OCI-LY7 (cell line): ENCODE measurements at regions of chr20 and their contacts with region 1.

Region 1: DNA sequence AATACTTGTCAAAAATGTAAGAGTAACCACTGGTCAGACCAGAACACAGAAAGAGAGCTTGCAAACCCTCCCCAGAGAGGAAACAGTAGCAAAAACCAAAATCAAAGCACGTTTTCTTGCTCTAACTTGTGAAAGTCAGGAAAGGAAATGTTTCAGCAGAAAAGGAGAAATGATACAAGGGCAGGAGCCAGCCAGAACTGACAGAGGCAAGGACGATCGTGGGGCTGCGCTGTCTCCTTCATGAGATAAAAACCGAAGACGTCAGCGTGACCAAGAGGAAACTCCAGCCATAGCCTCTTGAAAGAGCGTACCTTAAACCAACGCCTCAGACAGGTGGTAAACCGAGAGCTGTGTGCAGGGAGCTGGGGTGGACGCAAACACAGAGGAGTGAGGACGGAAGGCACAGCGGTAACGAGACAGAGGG is 27.5 kb downstream of the LAMA5 start:
- DNase-seq: peak; percentile 92
- H3K4me3 ChIP-seq: peak overlapping the region; percentile 62
- H3K27ac ChIP-seq: peak overlapping the region; percentile 97
- H3K4me1 ChIP-seq: peaks cover 71% of the 10 kb centered on the region
- CTCF ChIP-seq: no peak

Region 2: DNA sequence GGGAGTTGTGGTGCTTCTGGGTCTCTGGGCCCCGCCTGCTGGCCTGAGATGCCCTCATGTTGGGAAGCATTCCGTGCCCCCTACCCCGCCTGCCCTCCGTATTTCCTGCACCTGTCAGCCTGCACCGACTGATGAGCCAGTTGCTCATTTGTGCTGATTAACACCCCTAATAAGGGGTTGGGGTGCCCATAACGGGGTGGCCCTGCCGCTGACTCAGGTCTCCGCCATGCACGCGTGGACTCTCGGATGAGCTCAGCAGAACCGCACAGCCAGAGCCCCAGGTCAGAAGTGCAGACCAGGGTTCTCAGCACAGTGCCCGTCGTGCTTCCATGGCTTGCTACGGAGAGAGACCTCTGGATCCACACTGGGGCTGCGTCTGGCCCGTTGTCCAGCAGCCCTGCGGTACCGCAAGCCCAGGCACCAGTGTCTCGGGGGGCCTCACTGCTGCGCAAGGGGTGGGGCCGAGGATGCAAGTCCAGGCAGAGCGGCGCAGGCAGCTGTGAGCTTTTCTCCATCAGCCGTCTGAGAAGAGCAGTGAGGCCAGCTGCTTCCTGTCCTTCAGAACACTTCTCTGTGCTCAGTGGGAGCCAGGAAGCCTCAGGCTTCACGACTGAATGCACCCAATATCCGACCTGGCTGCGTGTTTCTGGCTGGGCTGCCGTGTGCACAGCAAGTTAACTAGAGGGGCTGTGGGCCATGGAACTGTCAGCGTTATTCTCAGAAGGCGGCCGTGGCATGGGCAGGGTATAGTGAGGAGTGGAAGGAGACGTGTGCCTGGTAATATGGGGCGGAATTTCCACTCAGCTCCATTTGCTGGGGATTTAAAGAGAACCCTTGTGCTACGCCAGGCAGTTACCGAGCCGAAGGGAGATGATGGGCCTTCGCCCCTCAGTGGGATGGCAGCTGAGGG is 138.2 kb before region 1 on chr20:
- CTCF ChIA-PET with region 1: no interaction called
- POLR2A ChIA-PET with region 1: no interaction called
- intact Hi-C with region 1: no loop called
- DNase-seq: peak; percentile 70
- H3K4me3 ChIP-seq: no peak overlapping the region
- H3K27ac ChIP-seq: no peak overlapping the region
- H3K4me1 ChIP-seq: peaks cover 23% of the 10 kb centered on the region
- CTCF ChIP-seq: no peak

Region 3: DNA sequence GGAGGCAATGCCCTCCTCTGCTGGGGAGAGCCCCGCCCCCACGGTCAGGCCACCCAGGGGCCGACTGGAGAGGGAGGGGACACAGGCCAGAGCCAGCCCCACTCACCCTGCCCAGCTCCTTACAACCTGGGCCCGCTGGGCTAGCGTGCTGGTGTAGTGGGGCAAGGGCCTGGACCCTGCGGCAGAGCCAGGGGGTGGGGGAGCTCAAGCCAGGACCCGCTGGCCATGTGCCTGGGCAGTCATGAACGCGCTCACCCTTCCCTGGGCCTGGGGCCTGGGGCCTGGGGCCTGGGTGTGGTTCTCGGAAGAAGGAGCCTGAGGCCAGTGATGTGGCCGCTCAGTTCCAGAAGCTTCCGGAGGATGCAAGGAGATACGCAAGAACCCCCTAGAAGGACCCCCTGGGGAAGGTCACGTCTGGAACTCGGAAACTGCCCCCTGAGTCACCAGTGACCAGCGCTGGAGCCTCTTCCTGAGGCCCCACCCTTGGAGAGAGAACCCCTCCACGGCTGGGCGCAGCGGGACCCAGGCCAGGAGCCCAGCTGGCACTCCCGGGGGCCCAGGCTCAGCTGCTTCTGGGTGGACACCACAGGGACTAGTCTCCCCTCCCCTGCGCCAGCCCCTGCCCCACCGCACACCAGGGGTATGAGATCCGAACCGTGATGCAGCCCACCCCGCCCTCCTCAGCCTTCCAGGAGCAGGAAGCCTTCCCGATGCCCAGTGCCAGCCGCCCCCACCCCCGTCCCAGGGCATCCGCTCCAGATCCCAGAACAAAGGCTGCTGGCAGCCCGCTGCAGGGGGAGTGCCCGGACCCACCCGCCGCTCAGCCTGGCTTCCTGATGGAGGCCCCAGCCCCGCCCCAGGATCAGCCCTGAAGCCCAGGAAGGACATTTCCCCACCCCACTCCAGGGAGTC is 19.8 kb after region 1 on chr20:
- CTCF ChIA-PET with region 1: no interaction called
- POLR2A ChIA-PET with region 1: interaction called, 5 read pairs
- intact Hi-C with region 1: loop called (anchors 1 kb)
- DNase-seq: no peak
- H3K4me3 ChIP-seq: no peak overlapping the region
- H3K27ac ChIP-seq: peak overlapping the region; percentile 46
- H3K4me1 ChIP-seq: peaks cover 66% of the 10 kb centered on the region
- CTCF ChIP-seq: no peak

Region 4: DNA sequence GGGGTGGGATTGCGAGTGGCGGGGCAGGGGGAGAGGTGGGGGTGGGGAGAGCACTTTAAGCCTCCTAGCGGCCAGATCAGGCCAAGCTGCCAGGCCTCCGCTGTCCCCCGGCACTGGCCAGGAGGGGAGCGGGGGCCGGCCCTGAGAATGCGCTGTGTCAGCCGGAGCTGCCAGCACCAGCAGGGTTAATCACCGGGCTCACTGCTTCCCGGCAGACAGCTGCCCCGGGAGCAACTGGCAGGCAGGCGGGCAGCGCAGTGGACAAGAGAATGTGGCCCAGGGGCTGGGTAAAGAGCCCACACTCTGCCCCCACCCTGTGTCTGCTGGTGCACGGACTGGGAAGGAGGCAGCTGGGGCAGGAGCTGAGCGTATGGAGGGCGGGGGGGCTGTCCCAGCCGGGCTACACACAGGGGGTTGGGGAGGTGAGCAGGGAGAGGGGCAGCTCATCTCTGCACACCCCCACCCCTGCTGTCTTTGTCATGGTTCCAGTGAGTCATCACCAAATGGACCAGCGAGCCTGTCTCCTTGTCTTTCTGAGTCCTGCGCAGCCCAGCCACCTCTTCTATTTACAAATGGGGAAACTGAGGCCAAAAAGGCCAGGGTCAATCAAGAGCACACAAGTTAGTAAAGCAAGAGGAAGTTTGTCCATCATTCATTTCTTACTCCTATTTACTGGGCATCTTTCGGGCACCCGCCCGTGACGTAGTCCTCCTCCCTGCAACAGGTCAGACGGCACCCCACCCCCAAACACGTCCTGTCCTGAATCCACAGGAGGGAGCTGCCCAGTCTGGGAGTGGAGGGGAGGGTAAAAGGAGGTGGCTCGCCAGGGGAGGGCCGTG is 29.5 kb after region 1 on chr20:
- CTCF ChIA-PET with region 1: no interaction called
- POLR2A ChIA-PET with region 1: interaction called, 3 read pairs
- intact Hi-C with region 1: loop called (anchors 1 kb)
- DNase-seq: no peak
- H3K4me3 ChIP-seq: no peak overlapping the region
- H3K27ac ChIP-seq: no peak overlapping the region
- H3K4me1 ChIP-seq: peaks cover 39% of the 10 kb centered on the region
- CTCF ChIP-seq: peak; percentile 42

Region 5: DNA sequence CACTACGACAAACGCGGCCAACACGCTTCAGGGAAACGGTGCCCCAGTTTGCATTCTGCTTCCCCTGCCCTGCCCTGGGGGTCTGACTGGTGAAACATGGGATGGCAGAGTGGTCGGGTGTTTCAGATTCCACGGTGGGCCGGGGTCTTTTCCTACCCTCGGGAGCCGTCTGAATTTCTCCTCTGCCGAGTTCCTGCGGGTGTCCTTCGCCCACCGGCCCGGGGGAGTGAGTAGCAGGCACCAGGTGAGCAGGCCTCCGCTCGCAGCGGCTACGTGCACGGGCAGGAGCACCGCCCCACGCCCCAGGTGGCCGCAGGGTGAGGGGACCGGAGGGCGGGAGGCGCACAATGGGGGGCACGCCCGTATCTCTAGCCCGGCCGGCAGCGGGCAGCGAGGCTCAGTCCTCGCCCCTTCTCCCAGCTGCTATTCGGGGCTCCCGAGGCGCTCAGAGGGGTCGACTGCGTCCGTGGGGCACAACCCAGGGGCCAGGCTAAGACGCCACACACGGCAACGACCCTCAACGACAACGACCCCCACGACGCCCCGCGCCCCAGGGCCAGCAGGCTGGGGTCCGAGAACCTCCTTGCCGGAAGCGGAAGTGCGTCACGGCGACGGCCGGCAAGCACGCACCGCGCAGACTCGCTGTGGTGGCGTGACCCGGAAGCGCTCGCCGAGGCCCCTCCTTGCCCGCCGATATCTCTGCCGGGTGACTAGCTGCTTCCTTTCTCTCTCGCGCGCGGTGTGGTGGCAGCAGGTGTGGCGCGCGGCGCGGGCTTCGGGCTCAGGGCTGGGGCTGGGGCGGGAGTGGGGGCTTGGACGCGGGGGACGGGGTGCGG is 46.9 kb after region 1 on chr20 and contains the start of gene RPS21:
- CTCF ChIA-PET with region 1: no interaction called
- POLR2A ChIA-PET with region 1: interaction called, 3 read pairs
- intact Hi-C with region 1: loop called (anchors 5 kb)
- DNase-seq: peak; percentile 95
- H3K4me3 ChIP-seq: peak within 1 kb of the TSS; percentile 100
- H3K27ac ChIP-seq: peak within 1 kb of the TSS; percentile 72
- H3K4me1 ChIP-seq: peaks cover 45% of the 10 kb centered on the region
- CTCF ChIP-seq: no peak
- total RNA-seq, gene RPS21: 2,092 and 3,376 TPM in 2 replicates

Region 6: DNA sequence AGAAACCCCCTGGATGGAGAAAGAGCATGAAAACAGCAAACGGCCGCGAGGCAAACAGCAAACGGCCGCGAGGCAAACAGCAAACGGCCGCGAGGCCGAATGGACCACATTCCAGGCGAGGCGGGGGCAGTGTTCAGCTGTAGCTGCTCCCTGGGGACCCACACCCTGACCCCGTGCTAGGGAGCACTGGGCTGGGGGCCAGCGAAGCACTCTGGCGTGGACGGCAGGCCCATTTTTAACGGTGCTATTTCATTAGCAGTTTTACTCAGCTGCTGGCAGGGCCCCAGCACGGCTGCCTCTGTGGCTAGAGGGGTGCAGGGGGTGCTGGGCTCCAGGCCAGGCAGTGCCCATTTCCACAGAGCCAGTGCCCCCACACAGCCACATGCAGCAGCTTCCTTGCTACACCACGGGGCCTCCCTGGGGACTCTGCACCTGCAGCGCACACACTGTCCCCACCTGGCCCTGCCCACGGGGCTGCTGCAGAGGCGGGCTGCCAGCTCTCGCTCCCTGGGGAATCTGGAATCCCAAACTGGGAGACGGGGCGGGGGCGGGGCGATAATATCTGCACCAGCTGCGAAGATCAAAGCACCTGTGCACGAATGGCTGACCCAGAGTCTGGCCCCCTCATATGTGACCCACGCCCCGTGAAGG is 267.0 kb after region 1 on chr20:
- CTCF ChIA-PET with region 1: no interaction called
- POLR2A ChIA-PET with region 1: no interaction called
- intact Hi-C with region 1: loop called (anchors 5 kb)
- DNase-seq: peak; percentile 91
- H3K4me3 ChIP-seq: peak overlapping the region; percentile 28
- H3K27ac ChIP-seq: peak overlapping the region; percentile 53
- H3K4me1 ChIP-seq: peaks cover 53% of the 10 kb centered on the region
- CTCF ChIP-seq: no peak